B cell (primary cell): ENCODE measurements at regions of chr14 and their contacts with region 1.

Region 1: DNA sequence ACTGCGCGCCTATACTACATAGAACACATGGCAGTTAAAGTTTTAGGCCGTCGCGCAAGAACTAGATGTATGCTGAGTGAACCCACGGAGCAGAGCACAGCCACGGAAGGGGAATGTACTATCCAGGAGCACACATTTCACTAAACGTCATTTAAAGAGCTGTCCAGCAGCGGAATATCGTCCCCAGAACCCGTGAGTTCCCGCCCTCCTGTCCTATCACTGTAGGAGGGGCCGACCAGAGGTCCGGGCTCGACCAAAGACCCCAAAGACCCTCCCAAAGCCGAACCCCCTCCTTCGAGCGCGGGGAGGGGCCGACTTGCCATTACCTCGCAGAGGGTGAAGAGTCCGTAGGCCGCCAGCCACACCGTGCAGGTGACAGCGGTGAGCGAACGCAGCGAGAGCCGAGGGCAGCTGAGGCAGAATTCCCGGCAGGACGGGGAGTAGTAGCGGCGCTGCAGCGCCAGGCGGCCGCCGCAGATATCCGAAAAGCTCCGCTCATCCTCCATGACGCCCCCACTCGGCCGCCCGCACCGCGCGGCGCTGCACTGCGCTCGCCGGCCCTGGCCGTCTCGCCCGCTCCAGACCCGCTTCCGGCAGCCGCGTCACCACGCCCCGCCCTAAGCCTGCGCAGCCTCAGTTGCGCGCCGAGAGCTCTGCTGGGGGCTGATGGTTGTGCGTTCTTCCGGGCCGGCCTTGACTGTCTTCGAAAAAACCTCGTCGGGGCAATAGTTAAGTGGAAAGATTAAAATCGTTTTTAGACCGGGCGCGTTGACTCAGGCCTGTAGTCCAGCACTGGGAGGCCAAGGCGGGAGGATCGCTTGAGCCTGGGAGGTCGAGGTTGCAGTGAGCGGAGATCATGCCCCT is at the start of gene PIGH:
- DNase-seq: peak; percentile 95
- ATAC-seq: peak; percentile 90
- H3K4me3 ChIP-seq: peak within 1 kb of the TSS; percentile 78 to 97 (median 94)
- H3K4me3 Mint-ChIP-seq: peak within 1 kb of the TSS; percentile 90
- H3K27ac ChIP-seq: peak within 1 kb of the TSS; percentile 84 to 85
- H3K27ac Mint-ChIP-seq: peak within 1 kb of the TSS; percentile 98
- H3K4me1 ChIP-seq: peaks cover 44 to 49% of the 10 kb centered on the region in 2 donors
- H3K4me1 Mint-ChIP-seq: peaks cover 61% of the 10 kb centered on the region
- H3K27me3 ChIP-seq: no peaks in the 10 kb centered on the region
- H3K27me3 Mint-ChIP-seq: no peaks in the 10 kb centered on the region
- CTCF ChIP-seq: peak; percentile 82
- total RNA-seq, gene PIGH: 26.7 and 30.4 TPM in 2 replicates

Region 2: DNA sequence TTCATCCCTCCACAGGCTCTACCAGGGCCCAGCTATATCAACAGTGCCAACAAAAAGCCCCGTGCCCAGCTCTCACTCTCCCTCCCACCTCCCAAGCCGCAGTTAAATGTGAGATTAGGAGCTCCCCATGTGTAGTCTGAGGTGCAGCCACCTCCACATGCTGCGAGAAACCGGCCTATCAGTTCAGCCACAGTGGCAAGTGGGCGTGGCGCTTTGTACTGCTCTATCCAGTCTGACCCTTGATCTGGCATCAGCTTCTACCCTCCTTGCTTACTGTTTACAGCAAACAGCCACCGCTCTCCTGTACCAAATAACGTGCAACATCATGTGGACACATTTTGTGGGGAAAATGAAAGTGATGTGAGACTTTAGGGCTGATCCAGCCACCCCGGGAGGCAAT is 189.6 kb before region 1 on chr14:
- CTCF ChIA-PET with region 1: no interaction called
- POLR2A ChIA-PET with region 1: no interaction called
- intact Hi-C with region 1: no loop called
- DNase-seq: no peak
- ATAC-seq: no peak
- H3K4me3 ChIP-seq: no peak overlapping the region
- H3K4me3 Mint-ChIP-seq: no peak overlapping the region
- H3K27ac ChIP-seq: no peak overlapping the region
- H3K27ac Mint-ChIP-seq: no peak overlapping the region
- H3K4me1 ChIP-seq: peaks cover 7 to 8% of the 10 kb centered on the region in 2 donors
- H3K4me1 Mint-ChIP-seq: peaks cover 4% of the 10 kb centered on the region
- H3K27me3 ChIP-seq: peaks cover 0 to 18% (median 5%) of the 10 kb centered on the region in 4 experiments
- H3K27me3 Mint-ChIP-seq: peaks cover 32% of the 10 kb centered on the region
- CTCF ChIP-seq: no peak

Region 3: GRCh38 chr14:67487937-67488893 is 111.7 kb before region 1 on chr14 and contains the start of gene TMEM229B:
- CTCF ChIA-PET with region 1: interaction called, 3 read pairs
- POLR2A ChIA-PET with region 1: interaction called, 6 read pairs
- intact Hi-C with region 1: loop called (anchors 1 kb)
- DNase-seq: peak; percentile 94
- ATAC-seq: peak; percentile 83
- H3K4me3 ChIP-seq: peak within 1 kb of the TSS; percentile 24 to 66 (median 55)
- H3K4me3 Mint-ChIP-seq: peak within 1 kb of the TSS; percentile 84
- H3K27ac ChIP-seq: peak within 1 kb of the TSS; percentile 97 to 98
- H3K27ac Mint-ChIP-seq: peak within 1 kb of the TSS; percentile 96
- H3K4me1 ChIP-seq: peaks cover 70 to 77% of the 10 kb centered on the region in 2 donors
- H3K4me1 Mint-ChIP-seq: peaks cover 83% of the 10 kb centered on the region
- H3K27me3 ChIP-seq: no peaks in the 10 kb centered on the region
- H3K27me3 Mint-ChIP-seq: no peaks in the 10 kb centered on the region
- CTCF ChIP-seq: peak; percentile 25
- total RNA-seq, gene TMEM229B: 4.2 and 6.9 TPM in 2 replicates

Region 4: GRCh38 chr14:67551940-67552339 is 48.0 kb before region 1 on chr14:
- CTCF ChIA-PET with region 1: no interaction called
- POLR2A ChIA-PET with region 1: no interaction called
- intact Hi-C with region 1: no loop called
- DNase-seq: no peak
- ATAC-seq: no peak
- H3K4me3 ChIP-seq: no peak overlapping the region
- H3K4me3 Mint-ChIP-seq: no peak overlapping the region
- H3K27ac ChIP-seq: no peak overlapping the region
- H3K27ac Mint-ChIP-seq: no peak overlapping the region
- H3K4me1 ChIP-seq: no peaks in the 10 kb centered on the region
- H3K4me1 Mint-ChIP-seq: no peaks in the 10 kb centered on the region
- H3K27me3 ChIP-seq: peaks cover 0 to 5% (median 0%) of the 10 kb centered on the region in 4 experiments
- H3K27me3 Mint-ChIP-seq: peaks cover 16% of the 10 kb centered on the region
- CTCF ChIP-seq: no peak

Region 5: DNA sequence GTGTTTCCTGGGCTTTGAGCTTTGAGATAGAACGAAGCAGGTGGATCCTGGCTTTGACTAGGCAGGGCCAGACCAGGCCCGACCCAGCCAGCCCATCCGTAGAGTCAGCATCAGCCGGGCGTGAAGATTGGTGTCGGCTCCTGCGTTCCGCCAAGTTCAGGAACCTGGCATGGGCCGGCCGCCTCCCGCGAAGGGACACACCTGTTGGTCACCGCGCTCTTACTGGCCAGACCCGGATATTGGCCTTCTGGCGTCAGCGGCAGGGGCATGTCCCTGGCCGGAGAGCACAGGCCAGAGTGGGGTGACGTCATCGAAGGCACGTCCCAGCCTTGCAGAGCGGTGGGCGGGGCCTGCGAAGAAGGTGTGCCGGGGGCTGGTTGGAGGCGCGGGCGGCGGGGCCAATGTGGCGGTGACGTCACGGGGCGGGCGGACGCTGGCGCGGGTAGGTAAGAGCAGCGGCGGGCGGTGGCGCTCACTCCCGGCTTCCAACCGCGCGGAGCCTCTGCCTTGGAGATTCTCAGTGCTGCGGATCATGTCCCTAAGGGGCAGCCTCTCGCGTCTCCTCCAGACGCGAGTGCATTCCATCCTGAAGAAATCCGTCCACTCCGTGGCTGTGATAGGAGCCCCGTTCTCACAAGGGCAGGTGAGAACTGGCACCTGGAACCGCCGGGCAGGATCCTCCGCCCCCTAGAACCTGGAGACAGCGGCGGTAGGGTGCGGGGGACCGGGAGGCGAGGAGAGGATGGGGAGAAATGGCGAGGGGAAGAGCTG is 19.7 kb after region 1 on chr14 and contains the start of gene ARG2:
- CTCF ChIA-PET with region 1: interaction called, 24 read pairs
- POLR2A ChIA-PET with region 1: interaction called, 6 read pairs
- intact Hi-C with region 1: loop called (anchors 1 kb)
- DNase-seq: peak; percentile 98
- ATAC-seq: peak; percentile 94
- H3K4me3 ChIP-seq: peak within 1 kb of the TSS; percentile 57 to 94 (median 81)
- H3K4me3 Mint-ChIP-seq: peak within 1 kb of the TSS; percentile 92
- H3K27ac ChIP-seq: peak within 1 kb of the TSS; percentile 76 to 78
- H3K27ac Mint-ChIP-seq: peak within 1 kb of the TSS; percentile 94
- H3K4me1 ChIP-seq: peaks cover 12 to 18% of the 10 kb centered on the region in 2 donors
- H3K4me1 Mint-ChIP-seq: peaks cover 23% of the 10 kb centered on the region
- H3K27me3 ChIP-seq: peaks cover 0 to 4% (median 0%) of the 10 kb centered on the region in 4 experiments
- H3K27me3 Mint-ChIP-seq: no peaks in the 10 kb centered on the region
- CTCF ChIP-seq: no peak
- total RNA-seq, gene ARG2: 1.8 and 2.0 TPM in 2 replicates

Region 6: DNA sequence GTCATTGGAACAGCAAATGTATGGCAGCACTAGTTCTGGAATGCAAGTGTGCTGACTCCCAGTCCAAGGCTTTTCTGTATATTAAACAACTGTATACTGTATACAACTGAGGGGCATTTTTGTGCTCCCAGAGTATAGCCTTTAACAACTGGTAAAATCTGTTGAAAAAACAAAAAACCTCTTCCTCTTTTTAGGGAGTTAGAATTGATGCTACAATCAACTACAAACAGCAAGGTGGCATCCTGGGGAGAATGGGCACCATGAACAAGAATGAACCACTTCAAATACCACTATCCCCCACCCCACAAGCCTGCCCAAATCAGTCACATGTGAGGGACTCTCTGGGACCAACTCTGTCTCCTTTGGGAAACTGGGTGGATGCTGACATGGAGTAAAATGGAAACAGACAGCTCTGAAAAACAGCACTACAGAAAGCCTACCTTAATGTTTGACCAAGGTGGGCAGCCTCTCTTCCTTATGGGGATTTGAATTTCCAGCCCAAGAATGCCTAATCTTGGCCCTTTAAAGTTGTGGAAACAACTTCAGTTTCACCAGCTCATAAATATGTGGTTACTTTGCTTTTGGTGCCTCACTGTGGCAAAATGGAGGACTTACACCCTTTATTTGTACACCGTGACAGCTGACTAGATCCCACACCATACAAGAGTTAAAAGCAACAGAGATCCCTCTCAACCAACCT is 67.0 kb after region 1 on chr14:
- CTCF ChIA-PET with region 1: interaction called, 39 read pairs
- POLR2A ChIA-PET with region 1: no interaction called
- intact Hi-C with region 1: no loop called
- DNase-seq: peak; percentile 74
- ATAC-seq: peak; percentile 75
- H3K4me3 ChIP-seq: no peak overlapping the region
- H3K4me3 Mint-ChIP-seq: peak overlapping the region; percentile 60
- H3K27ac ChIP-seq: peak overlapping the region; percentile 45 to 74
- H3K27ac Mint-ChIP-seq: peak overlapping the region; percentile 78
- H3K4me1 ChIP-seq: peaks cover 22 to 23% of the 10 kb centered on the region in 2 donors
- H3K4me1 Mint-ChIP-seq: peaks cover 51% of the 10 kb centered on the region
- H3K27me3 ChIP-seq: no peaks in the 10 kb centered on the region
- H3K27me3 Mint-ChIP-seq: no peaks in the 10 kb centered on the region
- CTCF ChIP-seq: peak; percentile 80

Region 7: DNA sequence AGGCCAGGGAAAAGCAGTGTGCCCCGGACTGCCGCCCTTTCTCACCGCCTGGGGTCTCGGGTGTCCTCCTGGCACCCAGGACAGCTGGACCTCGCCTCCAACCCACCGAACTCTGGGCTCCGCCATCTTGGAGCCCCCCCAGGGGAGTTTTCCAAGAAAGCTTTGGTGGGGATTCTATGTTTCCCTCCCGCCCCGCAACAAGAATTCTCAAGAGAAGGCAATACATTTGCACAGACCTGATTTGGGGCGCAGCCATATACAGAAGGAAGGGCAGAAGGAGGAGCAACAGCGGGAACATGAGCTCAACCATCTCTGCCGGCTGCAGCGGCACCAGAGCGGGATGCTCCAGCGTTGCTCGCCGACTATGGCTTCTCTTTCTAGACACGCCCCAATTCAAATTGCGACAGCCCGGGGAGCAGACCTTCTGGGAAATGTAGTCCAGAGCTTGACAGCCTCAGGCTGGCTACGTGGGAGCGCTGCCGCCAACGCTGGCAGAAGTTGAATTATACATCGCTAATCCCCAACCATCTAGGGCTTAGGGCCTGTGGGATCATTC is 95.5 kb after region 1 on chr14 and contains the start of gene RDH11:
- CTCF ChIA-PET with region 1: interaction called, 4 read pairs
- POLR2A ChIA-PET with region 1: interaction called, 4 read pairs
- intact Hi-C with region 1: loop called (anchors 1 kb)
- DNase-seq: peak; percentile 87
- ATAC-seq: peak; percentile 98
- H3K4me3 ChIP-seq: peak within 1 kb of the TSS; percentile 77 to 97 (median 94)
- H3K4me3 Mint-ChIP-seq: peak within 1 kb of the TSS; percentile 96
- H3K27ac ChIP-seq: peak within 1 kb of the TSS; percentile 62 to 88
- H3K27ac Mint-ChIP-seq: peak within 1 kb of the TSS; percentile 89
- H3K4me1 ChIP-seq: peaks cover 6 to 13% of the 10 kb centered on the region in 2 donors
- H3K4me1 Mint-ChIP-seq: peaks cover 14% of the 10 kb centered on the region
- H3K27me3 ChIP-seq: no peaks in the 10 kb centered on the region
- H3K27me3 Mint-ChIP-seq: no peaks in the 10 kb centered on the region
- CTCF ChIP-seq: no peak
- total RNA-seq, gene RDH11: 32.8 and 35.4 TPM in 2 replicates

Region 8: DNA sequence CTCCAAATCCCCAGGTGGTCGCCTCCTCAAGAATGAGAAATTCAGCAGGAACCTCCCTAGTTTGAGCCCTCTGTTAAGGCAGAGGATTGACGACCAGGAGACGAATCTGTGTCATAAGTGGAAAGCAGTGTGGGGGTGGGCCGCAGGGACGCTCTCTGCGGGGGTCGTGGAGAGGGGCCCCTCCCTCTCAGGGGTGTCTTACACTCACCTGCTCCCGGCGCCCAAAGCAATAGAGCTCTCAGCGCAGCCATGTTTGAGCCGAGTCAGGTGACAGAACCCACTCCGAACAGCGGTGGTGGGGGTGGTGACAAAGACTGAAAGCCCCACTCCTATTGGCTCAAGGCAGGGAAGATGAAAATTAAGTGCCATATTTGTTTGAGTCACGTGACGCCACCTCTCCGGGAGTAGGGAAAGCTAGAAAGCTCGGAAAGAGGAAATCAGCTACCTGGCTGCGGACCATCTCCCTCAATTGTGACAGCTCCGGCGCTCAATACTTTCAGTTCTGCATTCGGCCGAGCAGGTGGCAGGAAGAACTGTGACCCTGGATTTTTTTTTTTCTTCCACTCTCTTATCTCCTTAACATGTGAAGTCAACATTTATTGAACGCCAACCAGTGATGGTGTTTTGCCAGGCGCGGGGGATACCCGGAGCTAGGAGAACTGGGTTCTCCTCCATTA is 216.5 kb after region 1 on chr14 and contains the start of gene ZFYVE26:
- CTCF ChIA-PET with region 1: no interaction called
- POLR2A ChIA-PET with region 1: no interaction called
- intact Hi-C with region 1: loop called (anchors 1 kb)
- DNase-seq: peak; percentile 97
- ATAC-seq: peak; percentile 84
- H3K4me3 ChIP-seq: peak within 1 kb of the TSS; percentile 56 to 89 (median 77)
- H3K4me3 Mint-ChIP-seq: peak within 1 kb of the TSS; percentile 95
- H3K27ac ChIP-seq: peak within 1 kb of the TSS; percentile 79 to 84
- H3K27ac Mint-ChIP-seq: peak within 1 kb of the TSS; percentile 96
- H3K4me1 ChIP-seq: peaks cover 31 to 34% of the 10 kb centered on the region in 2 donors
- H3K4me1 Mint-ChIP-seq: peaks cover 55% of the 10 kb centered on the region
- H3K27me3 ChIP-seq: no peaks in the 10 kb centered on the region
- H3K27me3 Mint-ChIP-seq: no peaks in the 10 kb centered on the region
- CTCF ChIP-seq: no peak
- total RNA-seq, gene ZFYVE26: 46.3 and 53.9 TPM in 2 replicates